A673 (cell line): ENCODE measurements at regions of chr7 and their contacts with region 1.

Region 1: DNA sequence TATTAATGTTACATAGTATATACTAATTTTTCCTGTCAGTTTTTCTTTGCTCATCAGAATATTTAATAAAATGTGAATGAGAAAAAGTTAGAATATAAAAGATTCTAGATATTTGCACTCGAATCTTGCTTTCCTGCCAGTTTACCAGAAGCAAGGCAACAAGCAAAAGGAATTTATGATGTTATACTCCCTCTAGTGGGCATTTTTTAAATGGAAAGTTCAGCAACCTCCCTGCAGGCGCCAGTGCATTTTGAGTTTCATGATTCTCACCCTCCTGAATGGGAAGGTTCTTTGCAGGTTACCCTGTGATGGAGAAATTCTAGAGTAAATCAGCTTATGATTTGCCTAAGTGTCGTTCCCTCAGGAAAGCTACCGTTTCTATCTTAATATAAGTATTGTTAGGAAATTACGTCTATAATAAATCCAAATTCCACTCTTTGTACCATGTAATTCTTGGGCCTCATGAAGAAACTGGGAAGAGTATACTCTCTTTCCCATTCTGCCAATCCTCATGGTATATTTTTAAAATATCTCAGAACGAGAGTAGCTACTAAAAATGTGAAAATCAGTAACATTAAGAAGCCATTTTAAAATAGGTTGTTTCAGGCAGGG is 350.0 kb downstream of the CRPPA start:
- DNase-seq: peak; percentile 79
- H3K4me3 ChIP-seq: no peak overlapping the region
- H3K27ac ChIP-seq: no peak overlapping the region
- H3K4me1 ChIP-seq: peaks cover 6% of the 10 kb centered on the region
- H3K27me3 ChIP-seq: peaks cover 47% of the 10 kb centered on the region
- CTCF ChIP-seq: peak; percentile 77

Region 2: DNA sequence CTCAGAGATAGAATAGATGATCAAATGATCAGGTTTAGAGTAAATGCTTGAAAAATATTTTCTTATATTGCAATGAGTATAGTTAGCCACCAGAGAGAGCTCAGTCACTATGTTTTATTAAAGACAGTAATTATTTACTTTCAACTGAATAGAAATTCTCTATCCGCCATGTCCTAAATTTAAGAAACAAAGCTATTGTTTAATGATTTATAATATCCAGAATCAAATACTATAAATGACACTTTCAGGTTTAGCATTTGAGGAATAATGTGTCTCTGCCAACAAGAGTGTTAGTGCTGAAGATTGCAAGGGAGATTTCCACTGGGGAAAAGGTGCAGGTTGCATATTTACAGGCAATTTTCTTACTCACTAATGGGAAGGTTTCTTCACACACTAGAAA is 1353.5 kb before region 1 on chr7:
- CTCF ChIA-PET with region 1: no interaction called
- POLR2A ChIA-PET with region 1: no interaction called
- intact Hi-C with region 1: loop called (anchors 5 kb)
- DNase-seq: peak; percentile 27
- H3K4me3 ChIP-seq: no peak overlapping the region
- H3K27ac ChIP-seq: no peak overlapping the region
- H3K4me1 ChIP-seq: no peaks in the 10 kb centered on the region
- H3K27me3 ChIP-seq: peaks cover 21% of the 10 kb centered on the region
- CTCF ChIP-seq: peak; percentile 70

Region 3: DNA sequence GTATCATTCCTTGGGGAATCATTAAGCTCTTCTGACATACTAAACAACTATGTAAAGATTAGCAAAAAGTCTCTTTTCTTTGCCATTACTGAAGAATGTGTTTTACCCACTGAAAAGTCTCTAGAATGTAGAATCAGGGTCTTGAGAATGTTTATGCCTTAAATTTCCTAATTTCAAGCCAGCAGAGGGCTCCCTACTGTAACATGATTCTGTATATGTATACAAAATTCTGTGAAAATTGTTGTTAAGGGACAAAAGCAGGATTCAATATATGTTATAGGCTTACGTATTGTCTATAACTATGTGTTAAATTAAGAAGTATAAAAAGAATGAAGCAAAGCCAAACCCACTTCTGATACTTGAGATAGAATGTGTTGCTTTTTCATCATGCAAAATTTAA is 871.9 kb before region 1 on chr7:
- CTCF ChIA-PET with region 1: no interaction called
- POLR2A ChIA-PET with region 1: no interaction called
- intact Hi-C with region 1: loop called (anchors 2 kb)
- DNase-seq: peak; percentile 22
- H3K4me3 ChIP-seq: no peak overlapping the region
- H3K27ac ChIP-seq: no peak overlapping the region
- H3K4me1 ChIP-seq: peaks cover 9% of the 10 kb centered on the region
- H3K27me3 ChIP-seq: no peaks in the 10 kb centered on the region
- CTCF ChIP-seq: peak; percentile 59

Region 4: GRCh38 chr7:15326044-15326644 is 745.2 kb before region 1 on chr7:
- CTCF ChIA-PET with region 1: no interaction called
- POLR2A ChIA-PET with region 1: no interaction called
- intact Hi-C with region 1: loop called (anchors 5 kb)
- DNase-seq: peak; percentile 51
- H3K4me3 ChIP-seq: no peak overlapping the region
- H3K27ac ChIP-seq: no peak overlapping the region
- H3K4me1 ChIP-seq: no peaks in the 10 kb centered on the region
- H3K27me3 ChIP-seq: no peaks in the 10 kb centered on the region
- CTCF ChIP-seq: peak; percentile 68

Region 5: DNA sequence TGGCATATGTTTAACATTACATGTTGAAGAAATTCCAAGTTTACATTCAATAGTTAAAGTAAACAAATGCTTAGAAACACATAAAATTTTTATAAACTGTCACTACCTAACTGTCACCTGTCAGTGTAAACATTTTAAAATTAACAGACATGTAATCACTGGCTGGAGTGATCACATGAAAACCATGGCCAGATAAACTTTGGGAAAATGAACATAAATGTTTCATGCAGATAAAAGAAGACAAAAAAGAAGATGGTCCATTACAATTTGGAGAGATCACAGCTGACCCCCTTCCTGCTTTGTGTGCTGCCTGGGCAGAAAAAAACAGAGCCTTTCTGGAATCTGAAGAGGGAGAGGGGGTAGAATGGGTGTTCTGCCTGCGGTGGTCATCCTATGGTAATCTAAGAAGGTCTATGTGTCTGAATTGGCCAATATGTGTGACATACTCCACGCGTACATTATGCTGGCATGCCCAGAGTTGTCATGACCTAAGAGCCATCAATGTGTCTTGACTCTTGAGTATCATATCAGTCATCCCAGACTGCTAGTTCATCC is 327.3 kb before region 1 on chr7:
- CTCF ChIA-PET with region 1: no interaction called
- POLR2A ChIA-PET with region 1: no interaction called
- intact Hi-C with region 1: loop called (anchors 5 kb)
- DNase-seq: no peak
- H3K4me3 ChIP-seq: no peak overlapping the region
- H3K27ac ChIP-seq: no peak overlapping the region
- H3K4me1 ChIP-seq: peaks cover 5% of the 10 kb centered on the region
- H3K27me3 ChIP-seq: no peaks in the 10 kb centered on the region
- CTCF ChIP-seq: no peak